ENCODE measurements at regions of chr16 and their contacts with region 1.

Region 1: GRCh38 chr16:29915590-29916247 is 10.3 kb downstream of the KCTD13 start:
- DNase-seq: no peak
- H3K4me3 Mint-ChIP-seq: peak overlapping the region; percentile 12
- H3K27ac Mint-ChIP-seq: peak overlapping the region; percentile 42
- H3K4me1 Mint-ChIP-seq: peaks cover 42% of the 10 kb centered on the region
- H3K27me3 Mint-ChIP-seq: no peaks in the 10 kb centered on the region
- CTCF ChIP-seq: no peak

Region 2: DNA sequence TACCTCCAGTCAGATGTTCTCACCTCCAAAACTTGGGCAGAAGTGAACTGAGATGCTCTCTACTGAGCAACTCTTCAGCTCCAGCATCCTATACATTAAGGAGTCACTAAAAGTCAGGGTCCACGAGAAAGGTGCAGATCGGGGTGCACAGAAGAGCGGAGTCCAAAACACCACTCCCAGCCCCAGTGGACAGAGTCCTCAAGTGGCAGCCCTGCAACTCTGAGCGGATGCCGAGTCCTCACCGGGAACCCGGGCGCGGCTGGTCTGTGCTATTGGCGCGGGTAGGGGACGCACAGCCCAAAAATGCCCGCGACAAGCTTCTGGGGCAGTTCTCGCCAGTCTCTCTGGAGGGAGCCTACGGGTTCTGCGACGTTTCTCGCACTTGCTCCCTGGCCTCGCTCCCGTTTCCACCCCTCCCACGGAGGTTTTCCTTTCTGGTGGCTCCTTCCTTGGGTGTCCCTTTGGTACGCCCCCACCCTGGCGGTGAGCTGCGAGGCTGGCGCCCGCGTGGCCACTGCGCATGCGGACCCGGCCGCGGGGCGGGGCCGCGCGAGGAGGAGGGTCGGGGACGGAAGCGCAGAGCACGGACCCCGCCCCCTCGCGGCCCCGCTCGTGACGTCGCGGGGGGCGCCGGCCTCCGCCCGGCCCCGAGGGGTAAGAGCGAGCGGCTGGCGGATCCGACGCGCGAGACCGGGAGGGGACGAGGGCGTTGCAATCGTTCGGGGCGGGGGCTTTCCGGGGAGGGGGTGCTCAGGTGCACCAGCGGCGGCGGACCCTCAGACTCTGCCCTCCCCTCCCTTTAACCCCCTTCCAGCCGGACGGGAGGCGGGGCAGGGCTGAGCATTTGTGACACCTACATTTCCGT is 46.0 kb after region 1 on chr16 and contains the start of gene TMEM219:
- CTCF ChIA-PET with region 1: interaction called, 12 read pairs
- intact Hi-C with region 1: no loop called
- DNase-seq: peak; percentile 98
- H3K4me3 Mint-ChIP-seq: peak within 1 kb of the TSS; percentile 82
- H3K27ac Mint-ChIP-seq: peak within 1 kb of the TSS; percentile 92
- H3K4me1 Mint-ChIP-seq: peaks cover 11% of the 10 kb centered on the region
- H3K27me3 Mint-ChIP-seq: no peaks in the 10 kb centered on the region
- CTCF ChIP-seq: peak; percentile 72
- total RNA-seq, gene TMEM219: 91.1 and 92.1 TPM in 2 replicates

Region 3: GRCh38 chr16:29995324-29995910 is 79.7 kb after region 1 on chr16 and contains the start of gene HIRIP3:
- CTCF ChIA-PET with region 1: no interaction called
- intact Hi-C with region 1: no loop called
- DNase-seq: peak; percentile 92
- H3K4me3 Mint-ChIP-seq: peak within 1 kb of the TSS; percentile 100
- H3K27ac Mint-ChIP-seq: peak within 1 kb of the TSS; percentile 87
- H3K4me1 Mint-ChIP-seq: peaks cover 26% of the 10 kb centered on the region
- H3K27me3 Mint-ChIP-seq: no peaks in the 10 kb centered on the region
- CTCF ChIP-seq: no peak
- total RNA-seq, gene HIRIP3: 26.3 and 28.5 TPM in 2 replicates